HepG2 (cell line): ENCODE measurements at regions of chr4 and their contacts with region 1.

Region 1: GRCh38 chr4:56301181-56302076 is 85.9 kb downstream of the AASDH start:
- DNase-seq: peak; percentile 67
- ATAC-seq: peak; percentile 97
- H3K4me3 ChIP-seq: no peak overlapping the region
- H3K27ac ChIP-seq: no peak overlapping the region
- H3K4me1 ChIP-seq: peaks cover 28% of the 10 kb centered on the region
- H3K27me3 ChIP-seq: no peaks in the 10 kb centered on the region
- CTCF ChIP-seq: peak; percentile 94
- EP300 ChIP-seq: no peak
- POLR2A ChIP-seq: no peak
- RAD21 ChIP-seq: peak; percentile 90

Region 2: DNA sequence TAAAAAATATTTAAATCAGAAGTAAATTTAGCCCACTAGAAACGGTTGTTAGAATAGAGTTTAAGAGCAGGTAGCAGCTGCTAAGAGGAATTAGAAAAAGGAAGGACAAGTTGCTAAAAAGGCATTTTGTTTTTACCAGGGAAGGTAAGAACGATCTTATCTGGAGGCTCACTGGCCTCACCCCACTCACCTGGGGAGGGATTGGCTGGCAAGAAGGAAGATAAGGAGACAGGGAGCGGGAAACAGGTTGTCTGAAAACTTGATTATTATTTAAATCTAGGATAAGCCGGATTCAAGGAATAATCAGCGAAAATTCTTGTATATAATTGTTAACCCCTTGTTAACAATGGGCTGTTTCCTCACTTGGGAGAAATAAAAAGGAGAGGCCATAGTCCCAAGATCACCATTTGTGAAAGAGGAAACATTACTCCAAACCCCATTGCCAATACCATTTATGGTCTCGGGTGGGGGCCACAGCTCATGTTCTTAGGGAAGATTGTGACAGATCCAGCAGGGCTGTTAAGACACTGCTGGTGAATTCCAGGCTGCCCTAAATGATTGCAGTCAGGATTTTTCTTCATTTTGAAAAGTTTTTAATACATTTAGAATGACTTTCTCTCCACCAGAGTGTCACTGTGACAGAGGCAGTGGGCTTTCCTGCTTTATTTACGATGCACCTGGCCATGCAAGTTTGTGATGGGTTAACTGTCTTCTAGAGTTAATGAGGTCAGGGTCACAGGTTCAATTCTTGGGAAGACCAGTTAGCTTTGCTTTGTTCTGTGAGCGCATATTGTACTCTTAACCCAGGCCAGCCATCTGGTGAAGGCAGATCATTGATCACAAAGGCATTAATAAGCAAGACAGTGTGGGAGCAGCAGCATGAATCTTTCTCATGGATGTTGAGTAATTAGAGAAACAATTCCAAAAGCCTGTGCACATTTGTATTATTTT is 246.1 kb before region 1 on chr4:
- CTCF ChIA-PET with region 1: no interaction called
- POLR2A ChIA-PET with region 1: no interaction called
- in situ Hi-C with region 1: no loop called
- intact Hi-C with region 1: loop called (anchors 2 kb)
- DNase-seq: no peak
- ATAC-seq: peak; percentile 64
- H3K4me3 ChIP-seq: no peak overlapping the region
- H3K27ac ChIP-seq: peak overlapping the region; percentile 40
- H3K4me1 ChIP-seq: peaks cover 32% of the 10 kb centered on the region
- H3K27me3 ChIP-seq: no peaks in the 10 kb centered on the region
- CTCF ChIP-seq: no peak
- EP300 ChIP-seq: no peak
- POLR2A ChIP-seq: no peak
- RAD21 ChIP-seq: no peak

Region 3: DNA sequence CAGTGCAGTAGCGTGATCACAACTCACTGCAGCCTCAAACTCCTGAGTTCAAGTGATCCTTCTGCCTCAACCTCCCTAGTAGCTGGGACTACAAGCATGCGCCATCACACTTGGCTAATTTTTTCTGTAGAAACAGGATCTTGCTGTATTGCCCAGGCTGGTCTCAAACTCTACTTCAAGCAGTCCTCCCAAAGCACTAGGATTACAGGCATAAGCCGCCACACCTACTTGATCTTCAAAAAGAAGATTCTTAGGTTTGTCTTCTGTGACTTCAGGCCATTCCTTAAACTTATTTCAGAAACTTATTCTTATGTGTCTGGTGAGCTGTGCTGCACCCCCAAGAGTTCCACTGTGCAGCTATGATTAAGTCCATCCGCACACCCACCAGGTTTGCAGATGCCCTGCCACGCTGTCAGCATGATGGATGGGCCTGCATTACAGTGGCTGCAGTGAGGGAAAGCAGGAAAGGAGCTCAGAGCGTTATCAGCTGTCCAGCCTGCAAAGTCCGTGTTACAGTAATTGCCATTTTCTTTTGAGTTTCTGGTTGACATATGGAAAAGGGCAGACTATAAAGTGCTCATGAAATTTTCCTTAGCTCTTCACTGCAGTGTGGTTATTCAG is 60.8 kb before region 1 on chr4:
- CTCF ChIA-PET with region 1: no interaction called
- POLR2A ChIA-PET with region 1: no interaction called
- in situ Hi-C with region 1: no loop called
- intact Hi-C with region 1: loop called (anchors 5 kb)
- DNase-seq: peak; percentile 55
- ATAC-seq: peak; percentile 87
- H3K4me3 ChIP-seq: peak overlapping the region; percentile 28 to 43 (median 29); a peak in 3 of 6 replicates
- H3K27ac ChIP-seq: peak overlapping the region; percentile 65
- H3K4me1 ChIP-seq: peaks cover 75% of the 10 kb centered on the region
- H3K27me3 ChIP-seq: no peaks in the 10 kb centered on the region
- CTCF ChIP-seq: no peak
- EP300 ChIP-seq: peak in 1 of 2 experiments; percentile 40; a peak in 1 of 4 replicates
- POLR2A ChIP-seq: no peak
- RAD21 ChIP-seq: no peak

Region 4: GRCh38 chr4:56530269-56531148 is 229.1 kb after region 1 on chr4:
- CTCF ChIA-PET with region 1: no interaction called
- POLR2A ChIA-PET with region 1: no interaction called
- in situ Hi-C with region 1: no loop called
- intact Hi-C with region 1: no loop called
- DNase-seq: peak; percentile 12
- ATAC-seq: peak; percentile 93
- H3K4me3 ChIP-seq: peak overlapping the region; percentile 44 to 66 (median 49); a peak in 4 of 6 replicates
- H3K27ac ChIP-seq: no peak overlapping the region
- H3K4me1 ChIP-seq: peaks cover 10% of the 10 kb centered on the region
- H3K27me3 ChIP-seq: peaks cover 2 to 26% of the 10 kb centered on the region in 2 experiments; a peak in 3 of 5 replicates
- CTCF ChIP-seq: no peak
- EP300 ChIP-seq: no peak
- POLR2A ChIP-seq: no peak
- RAD21 ChIP-seq: no peak